ENCODE measurements at regions of chr10 and their contacts with region 1.

Region 1: DNA sequence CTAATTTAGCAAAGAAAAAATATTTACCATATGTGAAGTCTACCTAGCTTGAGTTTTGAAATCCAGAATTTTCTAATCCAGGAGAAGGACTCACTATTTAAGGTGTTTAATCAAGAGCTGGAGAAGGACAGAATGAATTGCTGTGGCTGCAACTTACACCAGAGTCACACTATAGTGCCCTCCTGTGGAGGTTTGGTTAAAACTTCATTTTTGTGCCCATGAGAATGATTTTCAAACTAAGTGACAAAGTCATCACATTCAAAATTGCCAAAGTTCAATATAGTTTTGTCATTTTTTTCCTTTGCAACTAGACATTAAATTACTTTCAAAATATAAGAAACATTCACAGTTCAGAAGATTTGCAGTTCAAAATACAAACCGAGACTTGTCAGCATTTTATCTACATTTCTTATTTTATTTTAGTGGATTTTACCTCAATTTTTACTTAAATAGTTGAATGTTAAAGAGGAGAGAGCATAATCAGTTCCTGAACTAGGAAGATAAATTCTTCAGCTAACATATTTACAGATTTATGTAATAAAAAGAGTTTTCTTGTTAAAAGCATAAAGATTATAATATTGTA is 70.7 kb downstream of the CABCOCO1 start:
- DNase-seq: peak in 1 of 5 donors; percentile 10
- ATAC-seq: no peak
- H3K4me3 ChIP-seq: no peak overlapping the region
- H3K27ac ChIP-seq: no peak overlapping the region
- H3K4me1 ChIP-seq: no peaks in the 10 kb centered on the region
- H3K27me3 ChIP-seq: no peaks in the 10 kb centered on the region
- CTCF ChIP-seq: peak; percentile 38 to 68 (median 56)
- POLR2A ChIP-seq: no peak

Region 2: DNA sequence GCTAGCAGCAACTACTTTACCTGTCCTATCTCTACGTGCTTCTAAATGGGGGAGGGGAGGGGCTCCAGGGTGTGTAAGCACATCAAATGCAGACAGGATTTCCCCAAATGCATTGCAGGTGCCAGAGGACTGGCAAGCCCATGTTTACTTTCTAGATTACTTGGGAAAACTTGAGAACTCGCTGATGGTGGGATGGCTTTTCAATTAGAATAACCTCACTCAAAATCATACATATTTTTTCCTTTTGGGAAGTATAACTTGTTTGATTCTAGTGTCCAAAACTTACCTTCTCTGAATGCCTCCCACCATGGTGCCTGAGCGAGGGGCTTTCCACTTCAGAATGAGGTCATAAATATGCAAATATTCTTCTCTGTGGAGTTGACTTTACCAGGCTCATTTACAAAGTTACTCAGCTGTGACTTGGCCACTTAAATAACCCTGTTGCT is 598.1 kb before region 1 on chr10:
- intact Hi-C with region 1: loop called in 4 of 10 experiments (anchors 10 kb)
- DNase-seq: no peak
- ATAC-seq: no peak
- H3K4me3 ChIP-seq: no peak overlapping the region
- H3K27ac ChIP-seq: no peak overlapping the region
- H3K4me1 ChIP-seq: peaks cover 0 to 14% (median 0%) of the 10 kb centered on the region in 12 donors
- H3K27me3 ChIP-seq: no peaks in the 10 kb centered on the region
- CTCF ChIP-seq: no peak
- POLR2A ChIP-seq: no peak

Region 3: DNA sequence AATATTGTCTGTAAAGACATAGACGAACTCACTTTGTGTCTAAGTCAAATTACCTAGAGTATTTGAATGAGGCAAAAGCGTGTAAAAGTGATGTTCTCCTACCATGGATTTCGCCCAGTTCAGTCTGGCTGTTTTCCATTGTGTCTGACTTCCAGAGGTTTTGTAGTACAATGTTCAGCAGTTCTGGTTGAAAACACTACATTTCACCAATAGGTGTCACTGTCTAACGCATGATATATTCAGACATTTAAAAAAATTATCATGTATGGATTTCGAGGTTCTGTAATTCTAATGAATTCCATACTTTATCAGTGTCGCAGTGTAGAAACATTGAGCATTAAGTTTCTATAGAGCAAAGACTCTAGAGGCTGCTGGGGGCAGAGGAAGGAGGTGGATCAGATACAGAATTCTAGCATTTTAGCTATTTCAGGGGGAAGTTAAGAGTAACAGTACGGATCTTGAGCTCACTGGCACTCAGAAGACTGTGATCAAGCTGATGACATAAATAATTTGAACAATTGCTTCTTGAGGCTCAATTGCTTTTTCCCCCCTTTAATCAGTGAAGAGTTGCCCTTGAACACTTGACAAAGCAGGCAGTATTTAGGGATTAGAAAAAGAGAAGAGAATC is 592.6 kb before region 1 on chr10:
- intact Hi-C with region 1: loop called in 4 of 10 experiments (anchors 10 kb)
- DNase-seq: peak in 2 of 5 donors; percentile 28 to 33
- ATAC-seq: peak; percentile 37 to 75 (median 66)
- H3K4me3 ChIP-seq: no peak overlapping the region
- H3K27ac ChIP-seq: no peak overlapping the region
- H3K4me1 ChIP-seq: peaks cover 0 to 18% (median 2%) of the 10 kb centered on the region in 12 donors
- H3K27me3 ChIP-seq: no peaks in the 10 kb centered on the region
- CTCF ChIP-seq: peak; percentile 59 to 83 (median 76)
- POLR2A ChIP-seq: no peak

Region 4: GRCh38 chr10:61606951-61607907 is 126.2 kb before region 1 on chr10:
- intact Hi-C with region 1: loop called in 1 of 10 experiments (anchors 10 kb)
- DNase-seq: no peak
- ATAC-seq: no peak
- H3K4me3 ChIP-seq: no peak overlapping the region
- H3K27ac ChIP-seq: no peak overlapping the region
- H3K4me1 ChIP-seq: peaks cover 0 to 4% (median 0%) of the 10 kb centered on the region in 12 donors
- H3K27me3 ChIP-seq: no peaks in the 10 kb centered on the region
- CTCF ChIP-seq: peak in 8 of 12 donors; percentile 11 to 48 (median 33)
- POLR2A ChIP-seq: no peak

Region 5: GRCh38 chr10:61662794-61663259 is 70.6 kb before region 1 on chr10 and contains the start of gene CABCOCO1:
- intact Hi-C with region 1: loop called in 1 of 10 experiments (anchors 2 kb)
- DNase-seq: peak; percentile 66 to 81 (median 71)
- ATAC-seq: peak; percentile 51 to 99 (median 96)
- H3K4me3 ChIP-seq: peak within 1 kb of the TSS; percentile 33 to 64 (median 57)
- H3K27ac ChIP-seq: peak within 1 kb of the TSS in 10 of 12 donors; percentile 40 to 69 (median 50)
- H3K4me1 ChIP-seq: peaks cover 0 to 7% (median 0%) of the 10 kb centered on the region in 12 donors
- H3K27me3 ChIP-seq: peaks cover 0 to 11% (median 0%) of the 10 kb centered on the region in 9 donors
- CTCF ChIP-seq: peak in 3 of 12 donors; percentile 21 to 39 (median 36)
- POLR2A ChIP-seq: no peak
- total RNA-seq, gene CABCOCO1: 0.19 to 1.5 (median 1.1) TPM in 3 of 9 donors, not detected in the others

Measured in heart left ventricle (tissue), 16 donors.